Upper lobe of right lung (tissue), 1 donor: ENCODE measurements at regions of chrX and their contacts with region 1.

Region 1: DNA sequence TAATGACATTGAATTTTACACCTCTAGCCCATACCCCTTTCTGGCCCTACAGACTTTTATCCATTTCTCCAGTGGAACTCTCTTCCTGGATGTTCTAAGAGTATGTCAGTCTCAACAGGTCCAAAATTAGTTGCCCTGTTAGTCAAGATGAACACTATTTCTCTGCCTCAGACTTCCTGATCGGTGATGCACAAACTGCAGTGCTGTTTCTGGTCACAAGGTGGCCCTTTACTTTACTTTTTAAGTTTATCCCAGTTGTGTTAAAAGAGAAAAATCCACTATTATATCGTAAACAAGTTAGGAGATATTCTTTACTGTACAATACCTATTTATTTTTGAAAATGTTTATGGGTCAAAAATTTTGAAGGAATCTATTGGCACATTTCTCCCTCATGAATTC is 13.1 kb downstream of the TCEAL7 start:
- DNase-seq: no peak
- ATAC-seq: peak; percentile 67
- H3K4me3 ChIP-seq: no peak overlapping the region
- H3K27ac ChIP-seq: no peak overlapping the region
- H3K4me1 ChIP-seq: no peaks in the 10 kb centered on the region
- H3K27me3 ChIP-seq: no peaks in the 10 kb centered on the region
- CTCF ChIP-seq: peak; percentile 70

Region 2: DNA sequence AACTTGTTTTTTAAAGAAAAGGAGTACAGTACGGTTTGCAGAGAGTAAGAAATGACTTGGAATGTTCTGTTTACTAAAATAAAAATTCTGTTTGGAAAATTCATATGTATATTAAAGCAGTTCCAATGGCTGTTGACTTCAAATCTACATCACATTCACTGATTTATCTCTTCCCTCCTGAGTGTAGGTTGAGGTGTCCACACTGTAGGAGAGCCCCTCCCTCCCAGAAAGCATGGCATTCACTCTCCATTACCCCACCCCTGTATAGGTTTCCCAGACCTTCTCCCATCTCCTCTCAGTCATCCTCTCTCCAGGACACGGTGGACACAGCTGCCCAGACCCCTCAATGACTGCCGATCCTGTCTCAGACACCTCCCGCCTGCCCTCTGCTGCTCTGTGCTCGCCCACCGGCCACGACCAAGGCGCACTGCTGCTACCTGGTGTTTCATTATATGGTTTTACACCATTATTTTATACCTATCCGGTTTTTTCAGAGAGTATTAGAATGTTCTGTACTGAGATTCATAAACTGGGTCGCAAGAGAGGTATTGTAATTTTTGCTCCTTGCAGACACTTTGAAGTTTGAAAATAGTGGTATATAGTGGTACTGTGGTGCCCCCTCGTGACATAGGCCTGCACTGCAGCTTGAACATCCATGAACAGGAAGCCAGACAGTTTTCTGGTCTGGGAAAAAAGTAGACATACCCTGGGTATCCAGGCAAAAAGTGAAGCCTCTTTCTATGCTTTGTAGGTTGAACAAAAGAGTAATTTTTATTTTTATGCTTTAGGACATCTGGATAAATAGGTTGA is 167.0 kb before region 1 on chrX:
- intact Hi-C with region 1: no loop called
- DNase-seq: no peak
- ATAC-seq: peak; percentile 78
- H3K4me3 ChIP-seq: no peak overlapping the region
- H3K27ac ChIP-seq: no peak overlapping the region
- H3K4me1 ChIP-seq: no peaks in the 10 kb centered on the region
- H3K27me3 ChIP-seq: no peaks in the 10 kb centered on the region
- CTCF ChIP-seq: peak; percentile 65

Region 3: DNA sequence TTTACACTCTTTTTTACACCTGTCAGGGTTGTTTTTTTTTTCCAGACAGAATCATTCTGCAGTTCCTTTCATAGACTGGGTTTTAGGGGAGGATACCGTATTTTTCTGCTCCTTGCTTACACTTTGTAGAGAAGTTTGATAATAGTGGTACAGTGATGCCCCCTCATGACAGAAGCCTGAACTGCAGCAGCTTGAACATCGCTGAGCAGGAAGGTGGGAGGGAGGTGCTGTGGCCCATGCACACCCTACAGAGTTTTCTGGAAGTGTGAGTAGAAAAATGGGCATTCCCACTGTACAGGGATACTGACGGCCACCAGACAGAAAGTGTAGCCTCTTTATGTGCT is 121.6 kb after region 1 on chrX:
- intact Hi-C with region 1: loop called (anchors 10 kb)
- DNase-seq: peak; percentile 57
- ATAC-seq: peak; percentile 99
- H3K4me3 ChIP-seq: peak overlapping the region; percentile 36
- H3K27ac ChIP-seq: no peak overlapping the region
- H3K4me1 ChIP-seq: no peaks in the 10 kb centered on the region
- H3K27me3 ChIP-seq: no peaks in the 10 kb centered on the region
- CTCF ChIP-seq: peak; percentile 72

Region 4: DNA sequence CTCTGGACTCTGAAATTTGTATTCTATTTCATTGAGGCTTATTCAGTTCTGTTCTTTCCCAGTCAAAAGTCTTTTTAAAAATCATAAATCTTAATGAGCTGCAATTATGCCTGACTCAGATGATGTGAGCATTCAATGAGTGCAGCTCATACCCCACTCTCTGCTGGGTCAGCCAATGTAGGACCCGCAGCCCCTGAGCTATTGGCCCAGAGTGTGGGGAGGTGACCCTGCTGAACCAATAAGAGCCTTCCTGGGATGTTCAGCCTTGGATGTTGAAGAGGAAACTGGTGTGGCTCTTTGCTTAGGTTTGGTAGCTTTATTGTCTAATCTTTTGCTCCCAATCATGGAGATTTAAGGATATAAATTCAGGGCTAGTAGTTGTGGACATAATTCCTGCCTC is 230.1 kb after region 1 on chrX:
- intact Hi-C with region 1: no loop called
- DNase-seq: no peak
- ATAC-seq: no peak
- H3K4me3 ChIP-seq: no peak overlapping the region
- H3K27ac ChIP-seq: no peak overlapping the region
- H3K4me1 ChIP-seq: no peaks in the 10 kb centered on the region
- H3K27me3 ChIP-seq: no peaks in the 10 kb centered on the region
- CTCF ChIP-seq: no peak